CD4-positive, alpha-beta memory T cell (primary cell): ENCODE measurements at regions of chr22 and their contacts with region 1.

Region 1: GRCh38 chr22:37817705-37818408 is 5.3 kb upstream of the GALR3 start:
- DNase-seq: peak; percentile 68 to 77 (median 71)
- H3K4me3 ChIP-seq: peak overlapping the region; percentile 34 to 36
- H3K4me3 Mint-ChIP-seq: peak overlapping the region in 7 of 8 donors; percentile 27 to 75 (median 48)
- H3K27ac ChIP-seq: no peak overlapping the region
- H3K27ac Mint-ChIP-seq: peak overlapping the region in 1 of 7 donors; percentile 30
- H3K4me1 ChIP-seq: peaks cover 19% of the 10 kb centered on the region
- H3K4me1 Mint-ChIP-seq: peaks cover 2 to 19% (median 11%) of the 10 kb centered on the region in 4 donors
- H3K27me3 ChIP-seq: no peaks in the 10 kb centered on the region
- H3K27me3 Mint-ChIP-seq: peaks cover 6 to 11% of the 10 kb centered on the region in 2 donors

Region 2: GRCh38 chr22:37843741-37843990 is 25.8 kb after region 1 on chr22:
- CTCF ChIA-PET with region 1: interaction called, 9 read pairs
- POLR2A ChIA-PET with region 1: interaction called, 13 read pairs
- intact Hi-C with region 1: loop called (anchors 1 kb)
- DNase-seq: peak in 1 of 5 donors; percentile 66
- H3K4me3 ChIP-seq: peak overlapping the region; percentile 29 to 77
- H3K4me3 Mint-ChIP-seq: peak overlapping the region; percentile 85 to 90 (median 88)
- H3K27ac ChIP-seq: peak overlapping the region; percentile 81
- H3K27ac Mint-ChIP-seq: peak overlapping the region; percentile 87 to 95 (median 91)
- H3K4me1 ChIP-seq: peaks cover 20% of the 10 kb centered on the region
- H3K4me1 Mint-ChIP-seq: peaks cover 15 to 35% (median 22%) of the 10 kb centered on the region in 4 donors
- H3K27me3 ChIP-seq: no peaks in the 10 kb centered on the region
- H3K27me3 Mint-ChIP-seq: no peaks in the 10 kb centered on the region

Region 3: GRCh38 chr22:37855462-37855861 is 37.6 kb after region 1 on chr22:
- CTCF ChIA-PET with region 1: interaction called, 255 read pairs
- POLR2A ChIA-PET with region 1: interaction called, 8 read pairs
- intact Hi-C with region 1: no loop called
- DNase-seq: no peak
- H3K4me3 ChIP-seq: no peak overlapping the region
- H3K4me3 Mint-ChIP-seq: no peak overlapping the region
- H3K27ac ChIP-seq: no peak overlapping the region
- H3K27ac Mint-ChIP-seq: peak overlapping the region in 1 of 7 donors; percentile 30
- H3K4me1 ChIP-seq: peaks cover 14% of the 10 kb centered on the region
- H3K4me1 Mint-ChIP-seq: peaks cover 23 to 43% (median 31%) of the 10 kb centered on the region in 4 donors
- H3K27me3 ChIP-seq: no peaks in the 10 kb centered on the region
- H3K27me3 Mint-ChIP-seq: no peaks in the 10 kb centered on the region

Region 4: GRCh38 chr22:37887610-37888378 is 69.9 kb after region 1 on chr22:
- CTCF ChIA-PET with region 1: interaction called, 12 read pairs
- POLR2A ChIA-PET with region 1: no interaction called
- intact Hi-C with region 1: no loop called
- DNase-seq: no peak
- H3K4me3 ChIP-seq: no peak overlapping the region
- H3K4me3 Mint-ChIP-seq: no peak overlapping the region
- H3K27ac ChIP-seq: no peak overlapping the region
- H3K27ac Mint-ChIP-seq: peak overlapping the region in 3 of 7 donors; percentile 2 to 36 (median 27)
- H3K4me1 ChIP-seq: no peaks in the 10 kb centered on the region
- H3K4me1 Mint-ChIP-seq: peaks cover 4 to 10% (median 9%) of the 10 kb centered on the region in 4 donors
- H3K27me3 ChIP-seq: no peaks in the 10 kb centered on the region
- H3K27me3 Mint-ChIP-seq: no peaks in the 10 kb centered on the region

Region 5: GRCh38 chr22:37965940-37966664 is 148.2 kb after region 1 on chr22:
- CTCF ChIA-PET with region 1: interaction called, 49 read pairs
- POLR2A ChIA-PET with region 1: interaction called, 3 read pairs
- intact Hi-C with region 1: loop called (anchors 1 kb)
- DNase-seq: no peak
- H3K4me3 ChIP-seq: no peak overlapping the region
- H3K4me3 Mint-ChIP-seq: no peak overlapping the region
- H3K27ac ChIP-seq: no peak overlapping the region
- H3K27ac Mint-ChIP-seq: no peak overlapping the region
- H3K4me1 ChIP-seq: no peaks in the 10 kb centered on the region
- H3K4me1 Mint-ChIP-seq: peaks cover 5 to 10% (median 6%) of the 10 kb centered on the region in 4 donors
- H3K27me3 ChIP-seq: no peaks in the 10 kb centered on the region
- H3K27me3 Mint-ChIP-seq: no peaks in the 10 kb centered on the region

Region 6: GRCh38 chr22:38069372-38070249 is 251.8 kb after region 1 on chr22:
- CTCF ChIA-PET with region 1: no interaction called
- POLR2A ChIA-PET with region 1: no interaction called
- intact Hi-C with region 1: no loop called
- DNase-seq: no peak
- H3K4me3 ChIP-seq: no peak overlapping the region
- H3K4me3 Mint-ChIP-seq: no peak overlapping the region
- H3K27ac ChIP-seq: no peak overlapping the region
- H3K27ac Mint-ChIP-seq: no peak overlapping the region
- H3K4me1 ChIP-seq: no peaks in the 10 kb centered on the region
- H3K4me1 Mint-ChIP-seq: no peaks in the 10 kb centered on the region
- H3K27me3 ChIP-seq: no peaks in the 10 kb centered on the region
- H3K27me3 Mint-ChIP-seq: no peaks in the 10 kb centered on the region